ENCODE measurements at regions of chr13 and their contacts with region 1.

Region 1: GRCh38 chr13:99176309-99177276 is 24.1 kb upstream of the UBAC2 start:
- DNase-seq: peak; percentile 87
- ATAC-seq: peak; percentile 91
- H3K4me3 Mint-ChIP-seq: peak overlapping the region; percentile 61
- H3K27ac Mint-ChIP-seq: peak overlapping the region; percentile 83
- H3K4me1 Mint-ChIP-seq: peaks cover 38% of the 10 kb centered on the region
- H3K27me3 Mint-ChIP-seq: no peaks in the 10 kb centered on the region
- CTCF ChIP-seq: peak; percentile 95

Region 2: GRCh38 chr13:99087096-99087953 is 89.3 kb before region 1 on chr13:
- CTCF ChIA-PET with region 1: interaction called, 10 read pairs
- POLR2A ChIA-PET with region 1: no interaction called
- intact Hi-C with region 1: no loop called
- DNase-seq: peak; percentile 93
- ATAC-seq: peak; percentile 88
- H3K4me3 Mint-ChIP-seq: peak overlapping the region; percentile 89
- H3K27ac Mint-ChIP-seq: peak overlapping the region; percentile 93
- H3K4me1 Mint-ChIP-seq: peaks cover 33% of the 10 kb centered on the region
- H3K27me3 Mint-ChIP-seq: no peaks in the 10 kb centered on the region
- CTCF ChIP-seq: peak; percentile 59

Region 3: DNA sequence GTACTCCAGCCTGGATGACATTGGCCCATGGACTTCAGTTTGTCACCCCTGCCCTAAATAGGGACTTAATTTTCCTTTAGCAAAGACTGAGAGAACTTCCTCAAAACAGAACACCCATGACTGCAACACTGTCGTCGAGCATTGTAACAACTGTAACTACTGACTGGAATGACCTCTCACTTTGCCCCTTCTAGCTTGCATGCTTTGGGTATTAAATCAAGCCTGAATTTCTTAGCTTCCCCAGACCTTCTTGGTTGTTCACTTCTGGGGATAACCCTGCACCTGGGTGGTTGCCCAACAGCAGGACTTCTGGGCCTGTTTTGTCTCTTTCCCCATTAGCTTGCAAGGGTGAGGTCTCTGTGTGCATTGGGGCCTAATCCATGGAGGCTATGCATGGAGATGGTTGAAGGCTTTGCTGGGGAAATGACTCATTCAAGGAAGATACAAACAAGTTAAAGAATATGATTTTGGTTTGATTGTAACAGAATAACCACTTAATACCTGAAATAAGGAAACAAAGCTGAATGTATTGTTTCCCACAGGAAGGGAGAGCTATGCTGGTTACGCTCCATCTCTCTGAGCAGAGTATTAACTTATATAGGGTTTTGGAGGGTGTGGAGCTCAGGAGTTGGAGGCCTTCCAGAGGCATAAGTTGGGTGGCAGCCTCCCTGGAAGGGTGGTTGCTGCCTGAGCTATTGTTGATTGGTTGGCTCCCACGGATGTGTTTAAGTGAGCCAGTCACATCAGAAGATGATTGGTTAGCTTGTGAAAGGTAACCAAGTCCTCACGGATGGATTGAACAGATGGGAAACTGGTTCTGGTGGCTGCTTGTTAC is 10.6 kb before region 1 on chr13:
- CTCF ChIA-PET with region 1: interaction called, 23 read pairs
- POLR2A ChIA-PET with region 1: no interaction called
- intact Hi-C with region 1: no loop called
- DNase-seq: no peak
- ATAC-seq: no peak
- H3K4me3 Mint-ChIP-seq: no peak overlapping the region
- H3K27ac Mint-ChIP-seq: no peak overlapping the region
- H3K4me1 Mint-ChIP-seq: peaks cover 2% of the 10 kb centered on the region
- H3K27me3 Mint-ChIP-seq: no peaks in the 10 kb centered on the region
- CTCF ChIP-seq: no peak

Region 4: DNA sequence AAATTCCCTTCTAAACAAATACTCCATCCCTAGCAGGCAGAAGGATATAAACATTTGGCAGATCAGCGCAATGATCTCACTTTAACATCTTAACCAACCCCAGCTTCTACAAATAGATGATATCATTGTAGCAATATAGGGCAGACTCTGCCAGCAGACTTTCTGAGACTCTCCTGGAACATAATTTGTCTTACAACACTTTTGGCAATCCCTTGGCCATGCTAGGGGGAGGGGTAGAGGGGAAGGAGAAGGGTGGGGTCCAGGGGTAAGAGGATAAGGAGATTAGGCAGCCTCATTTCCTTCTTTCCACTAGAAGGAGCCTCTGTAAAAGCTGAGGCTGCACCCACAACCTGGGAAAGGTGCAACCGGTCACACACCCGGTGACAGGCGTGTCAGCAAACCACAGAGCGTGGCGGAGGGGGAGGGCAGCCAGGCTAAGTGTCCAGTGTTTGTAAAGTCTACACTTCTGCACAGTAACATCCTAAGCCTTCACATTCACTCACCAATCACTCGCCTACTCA is 15.3 kb after region 1 on chr13:
- CTCF ChIA-PET with region 1: interaction called, 16 read pairs
- POLR2A ChIA-PET with region 1: no interaction called
- intact Hi-C with region 1: no loop called
- DNase-seq: no peak
- ATAC-seq: no peak
- H3K4me3 Mint-ChIP-seq: no peak overlapping the region
- H3K27ac Mint-ChIP-seq: no peak overlapping the region
- H3K4me1 Mint-ChIP-seq: peaks cover 13% of the 10 kb centered on the region
- H3K27me3 Mint-ChIP-seq: no peaks in the 10 kb centered on the region
- CTCF ChIP-seq: no peak

Region 5: DNA sequence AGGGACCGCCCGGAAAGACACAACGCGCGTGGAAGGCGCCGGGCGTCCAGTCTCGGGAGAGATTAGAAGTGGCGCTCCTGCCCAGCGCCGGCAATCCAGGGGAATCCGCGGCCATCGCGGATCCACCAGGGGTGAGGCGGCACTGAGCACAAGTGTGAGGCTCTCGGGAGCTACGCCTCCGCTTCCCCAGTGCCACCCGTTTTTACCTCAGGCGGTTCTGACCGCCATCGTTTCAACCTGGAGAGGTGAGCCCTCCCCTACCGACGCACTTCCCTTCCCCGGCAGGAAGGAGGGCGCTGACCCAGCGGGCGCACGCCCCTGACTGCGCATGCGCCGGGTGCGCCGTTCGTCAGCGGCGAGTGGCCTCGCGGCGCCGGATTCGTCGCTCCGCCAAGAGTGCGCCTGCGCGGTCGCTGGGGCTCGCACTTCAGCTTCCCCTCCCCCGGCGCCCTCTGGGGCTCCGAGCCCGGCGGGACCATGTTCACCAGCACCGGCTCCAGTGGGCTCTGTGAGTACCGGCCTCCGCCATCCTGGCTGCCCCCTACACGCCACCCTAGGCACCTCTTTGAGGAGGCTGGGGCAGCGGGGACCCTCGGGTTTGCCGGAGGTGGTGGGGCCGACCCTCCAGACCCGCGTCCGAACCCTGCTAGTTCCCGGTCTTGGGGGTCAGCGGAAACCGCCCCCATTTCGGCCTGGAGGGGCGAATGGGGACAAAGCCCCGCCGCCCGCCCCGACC is 24.0 kb after region 1 on chr13 and contains the start of gene UBAC2:
- CTCF ChIA-PET with region 1: interaction called, 46 read pairs
- POLR2A ChIA-PET with region 1: interaction called, 16 read pairs
- intact Hi-C with region 1: no loop called
- DNase-seq: peak; percentile 95
- ATAC-seq: peak; percentile 79
- H3K4me3 Mint-ChIP-seq: peak within 1 kb of the TSS; percentile 92
- H3K27ac Mint-ChIP-seq: peak within 1 kb of the TSS; percentile 94
- H3K4me1 Mint-ChIP-seq: peaks cover 62% of the 10 kb centered on the region
- H3K27me3 Mint-ChIP-seq: no peaks in the 10 kb centered on the region
- CTCF ChIP-seq: no peak
- total RNA-seq, gene UBAC2: 63.7 to 68.4 TPM

Region 6: DNA sequence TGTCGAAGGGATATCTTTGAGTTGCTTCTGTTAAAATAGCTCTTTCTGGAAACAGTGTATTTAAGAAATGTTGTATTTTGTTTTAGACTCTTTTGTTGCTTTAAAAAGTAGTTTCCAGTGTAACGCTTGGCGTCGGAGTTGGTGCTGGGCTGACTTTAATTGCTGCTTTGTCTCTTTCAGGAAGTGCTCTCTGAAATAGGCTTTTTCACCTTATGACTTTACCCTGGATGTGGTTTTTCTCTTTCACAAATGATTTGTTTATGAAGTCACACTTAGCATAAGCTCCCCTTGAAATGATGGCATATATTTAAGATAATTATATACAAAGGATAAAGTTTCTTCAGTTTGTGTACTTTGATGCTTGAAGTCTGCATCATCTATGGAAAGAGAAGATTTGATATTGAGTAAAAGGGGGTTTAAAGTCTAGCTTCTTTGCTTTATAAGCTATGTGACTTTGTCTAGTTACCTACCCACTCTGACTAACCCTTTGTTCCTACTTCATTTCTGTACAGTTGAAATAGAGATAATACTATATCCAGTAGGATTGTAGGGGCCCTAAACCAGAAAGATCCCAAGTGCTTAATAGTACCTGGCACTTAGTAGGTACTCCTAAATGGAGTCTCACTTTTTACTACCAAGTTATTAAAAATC is 81.7 kb after region 1 on chr13 and contains the start of gene GPR18:
- CTCF ChIA-PET with region 1: interaction called, 264 read pairs
- POLR2A ChIA-PET with region 1: interaction called, 5 read pairs
- intact Hi-C with region 1: no loop called
- DNase-seq: peak; percentile 66
- ATAC-seq: peak; percentile 74
- H3K4me3 Mint-ChIP-seq: peak within 1 kb of the TSS; percentile 84
- H3K27ac Mint-ChIP-seq: peak within 1 kb of the TSS; percentile 98
- H3K4me1 Mint-ChIP-seq: peaks cover 66% of the 10 kb centered on the region
- H3K27me3 Mint-ChIP-seq: no peaks in the 10 kb centered on the region
- CTCF ChIP-seq: no peak
- total RNA-seq, gene GPR18: 11.4 to 11.6 TPM

Region 7: DNA sequence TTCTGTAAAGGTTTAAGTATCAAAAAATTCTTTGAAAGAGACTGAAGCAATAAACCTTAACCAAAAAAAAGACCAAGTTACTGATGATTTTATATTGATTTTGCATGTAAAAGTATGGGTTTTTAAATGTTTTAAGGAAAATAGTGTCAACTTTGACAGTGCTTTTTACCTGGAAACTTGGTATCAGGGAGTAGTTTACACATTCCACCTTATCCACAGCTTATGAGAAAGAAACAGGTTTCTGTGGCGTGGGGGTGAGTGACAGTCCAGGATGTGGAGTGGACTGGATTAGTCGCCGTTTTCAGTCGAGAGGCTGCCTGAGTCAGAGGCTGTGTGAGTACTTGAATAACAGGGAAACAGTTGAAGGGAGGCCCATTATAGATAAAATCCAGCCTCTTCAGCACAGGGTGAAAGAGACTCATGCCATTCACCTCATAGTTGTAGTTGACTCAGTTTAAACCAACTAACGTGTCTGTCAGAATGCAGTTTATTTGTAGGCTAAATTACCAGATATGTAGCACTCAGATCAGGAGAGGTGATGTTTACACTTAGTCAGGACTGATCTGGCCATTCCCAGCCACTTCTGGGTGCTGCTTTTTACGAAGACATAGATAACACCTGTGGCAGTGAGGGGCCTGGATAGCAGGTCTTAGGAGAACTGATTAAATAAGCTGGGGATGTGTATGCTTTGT is 131.2 kb after region 1 on chr13:
- CTCF ChIA-PET with region 1: interaction called, 12 read pairs
- POLR2A ChIA-PET with region 1: no interaction called
- intact Hi-C with region 1: no loop called
- DNase-seq: peak; percentile 86
- ATAC-seq: peak; percentile 86
- H3K4me3 Mint-ChIP-seq: peak overlapping the region; percentile 76
- H3K27ac Mint-ChIP-seq: peak overlapping the region; percentile 93
- H3K4me1 Mint-ChIP-seq: peaks cover 85% of the 10 kb centered on the region
- H3K27me3 Mint-ChIP-seq: no peaks in the 10 kb centered on the region
- CTCF ChIP-seq: no peak